Activated CD4-positive, alpha-beta memory T cell treated with anti-CD3 and anti-CD28 coated beads for 36 hours (primary cell): ENCODE measurements at regions of chr16 and their contacts with region 1.

Region 1: GRCh38 chr16:3029537-3030402 is 5.9 kb downstream of the THOC6 start:
- DNase-seq: peak; percentile 73
- H3K4me3 Mint-ChIP-seq: peak overlapping the region; percentile 51
- H3K27ac Mint-ChIP-seq: no peak overlapping the region
- H3K4me1 Mint-ChIP-seq: peaks cover 16% of the 10 kb centered on the region
- H3K27me3 Mint-ChIP-seq: peaks cover 33% of the 10 kb centered on the region

Region 2: GRCh38 chr16:2867987-2868789 is 161.6 kb before region 1 on chr16:
- CTCF ChIA-PET with region 1: no interaction called
- POLR2A ChIA-PET with region 1: no interaction called
- intact Hi-C with region 1: no loop called
- DNase-seq: peak; percentile 99
- H3K4me3 Mint-ChIP-seq: peak overlapping the region; percentile 91
- H3K27ac Mint-ChIP-seq: peak overlapping the region; percentile 90
- H3K4me1 Mint-ChIP-seq: peaks cover 12% of the 10 kb centered on the region
- H3K27me3 Mint-ChIP-seq: no peaks in the 10 kb centered on the region

Region 3: GRCh38 chr16:2904100-2904921 is 125.5 kb before region 1 on chr16:
- CTCF ChIA-PET with region 1: no interaction called
- POLR2A ChIA-PET with region 1: no interaction called
- intact Hi-C with region 1: no loop called
- DNase-seq: peak; percentile 89
- H3K4me3 Mint-ChIP-seq: peak overlapping the region; percentile 97
- H3K27ac Mint-ChIP-seq: peak overlapping the region; percentile 85
- H3K4me1 Mint-ChIP-seq: peaks cover 16% of the 10 kb centered on the region
- H3K27me3 Mint-ChIP-seq: no peaks in the 10 kb centered on the region

Region 4: GRCh38 chr16:3045357-3045728 is 15.6 kb after region 1 on chr16:
- CTCF ChIA-PET with region 1: interaction called, 89 read pairs
- POLR2A ChIA-PET with region 1: interaction called, 5 read pairs
- intact Hi-C with region 1: no loop called
- DNase-seq: peak; percentile 54
- H3K4me3 Mint-ChIP-seq: peak overlapping the region; percentile 68
- H3K27ac Mint-ChIP-seq: no peak overlapping the region
- H3K4me1 Mint-ChIP-seq: peaks cover 14% of the 10 kb centered on the region
- H3K27me3 Mint-ChIP-seq: peaks cover 30% of the 10 kb centered on the region

Region 5: GRCh38 chr16:3065069-3065741 is 35.4 kb after region 1 on chr16 and contains the start of gene IL32:
- CTCF ChIA-PET with region 1: interaction called, 92 read pairs
- POLR2A ChIA-PET with region 1: no interaction called
- intact Hi-C with region 1: no loop called
- DNase-seq: peak; percentile 87
- H3K4me3 Mint-ChIP-seq: peak within 1 kb of the TSS; percentile 99
- H3K27ac Mint-ChIP-seq: peak within 1 kb of the TSS; percentile 100
- H3K4me1 Mint-ChIP-seq: peaks cover 67% of the 10 kb centered on the region
- H3K27me3 Mint-ChIP-seq: peaks cover 4% of the 10 kb centered on the region
- total RNA-seq, gene IL32: 2,504 to 2,532 TPM

Region 6: DNA sequence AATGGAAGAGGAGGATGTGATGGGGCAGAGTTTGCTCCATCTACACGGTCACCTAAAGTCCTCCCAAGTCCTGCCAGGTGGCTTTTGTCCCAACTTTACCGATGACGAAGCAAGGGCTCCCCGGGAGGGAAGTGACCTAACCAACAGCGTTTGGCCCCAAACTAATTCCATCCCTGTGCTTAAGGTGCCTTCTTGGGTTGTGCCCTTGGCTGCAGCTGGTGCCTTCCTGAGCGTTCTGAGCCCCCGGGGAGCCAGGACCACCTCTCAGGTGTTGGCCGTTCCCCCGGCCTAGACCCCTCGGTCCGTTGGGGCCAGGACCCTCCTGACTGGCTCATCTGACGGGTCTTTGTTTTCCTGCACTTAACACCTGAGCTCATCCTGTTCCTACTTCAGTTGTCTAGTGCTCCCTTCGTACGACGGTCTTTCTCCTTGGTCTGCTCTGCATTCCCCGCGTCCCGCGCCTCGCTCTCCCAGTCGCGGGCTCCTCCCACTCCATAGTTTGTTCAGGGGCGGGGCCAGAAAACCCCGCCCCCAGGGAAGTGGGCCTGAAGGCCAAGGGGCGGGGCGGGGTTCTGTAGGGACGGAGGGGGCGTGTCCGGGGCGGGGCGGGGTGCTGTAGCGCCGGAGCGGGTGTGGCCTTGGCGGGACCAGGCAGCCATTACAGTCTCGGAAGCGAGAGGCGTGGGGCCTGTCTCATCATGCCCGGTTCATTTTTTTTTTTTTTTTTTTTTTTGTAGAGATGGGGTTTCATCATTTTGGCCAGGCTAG is 70.1 kb after region 1 on chr16:
- CTCF ChIA-PET with region 1: interaction called, 15 read pairs
- POLR2A ChIA-PET with region 1: no interaction called
- intact Hi-C with region 1: no loop called
- DNase-seq: peak; percentile 97
- H3K4me3 Mint-ChIP-seq: peak overlapping the region; percentile 65
- H3K27ac Mint-ChIP-seq: peak overlapping the region; percentile 54
- H3K4me1 Mint-ChIP-seq: peaks cover 39% of the 10 kb centered on the region
- H3K27me3 Mint-ChIP-seq: no peaks in the 10 kb centered on the region